ENCODE measurements at regions of chr12 and their contacts with region 1.

Region 1: GRCh38 chr12:91637789-91638624 is 455.4 kb upstream of the DCN start:
- DNase-seq: no peak
- ATAC-seq: peak; percentile 43
- H3K4me3 ChIP-seq: no peak overlapping the region
- H3K27ac ChIP-seq: no peak overlapping the region
- H3K4me1 ChIP-seq: no peaks in the 10 kb centered on the region
- H3K27me3 ChIP-seq: no peaks in the 10 kb centered on the region
- CTCF ChIP-seq: no peak
- EP300 ChIP-seq: no peak
- POLR2A ChIP-seq: no peak
- RAD21 ChIP-seq: no peak

Region 2: DNA sequence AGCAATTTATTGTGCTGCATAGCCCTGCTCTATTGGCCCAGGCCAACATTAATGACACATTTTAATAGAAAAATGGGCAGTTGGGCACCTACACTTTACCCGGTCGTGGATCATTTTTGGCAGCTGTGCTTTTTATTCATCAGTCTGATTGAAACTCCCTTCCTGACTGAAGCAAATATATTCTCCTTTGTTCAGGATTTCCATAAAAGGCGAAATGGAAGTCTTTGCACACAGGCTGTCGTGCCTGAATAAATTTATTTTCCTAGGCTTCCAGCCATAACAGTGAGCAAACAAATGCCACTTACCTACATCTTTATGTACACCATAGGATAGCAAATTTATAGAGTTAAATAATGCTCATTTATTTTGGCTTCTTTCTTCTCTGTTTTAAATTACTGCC is 25.3 kb after region 1 on chr12:
- CTCF ChIA-PET with region 1: interaction called, 3 read pairs
- POLR2A ChIA-PET with region 1: no interaction called
- RAD21 ChIA-PET with region 1: no interaction called
- SMC1A ChIA-PET with region 1: no interaction called
- in situ Hi-C with region 1: no loop called
- intact Hi-C with region 1: loop called (anchors 1 kb)
- DNase-seq: no peak
- ATAC-seq: no peak
- H3K4me3 ChIP-seq: no peak overlapping the region
- H3K27ac ChIP-seq: no peak overlapping the region
- H3K4me1 ChIP-seq: no peaks in the 10 kb centered on the region
- H3K27me3 ChIP-seq: no peaks in the 10 kb centered on the region
- CTCF ChIP-seq: no peak
- EP300 ChIP-seq: no peak
- POLR2A ChIP-seq: no peak
- RAD21 ChIP-seq: no peak

Region 3: GRCh38 chr12:91685917-91686316 is 47.9 kb after region 1 on chr12:
- CTCF ChIA-PET with region 1: no interaction called
- POLR2A ChIA-PET with region 1: no interaction called
- RAD21 ChIA-PET with region 1: no interaction called
- SMC1A ChIA-PET with region 1: no interaction called
- in situ Hi-C with region 1: no loop called
- intact Hi-C with region 1: no loop called
- DNase-seq: no peak
- ATAC-seq: no peak
- H3K4me3 ChIP-seq: no peak overlapping the region
- H3K27ac ChIP-seq: no peak overlapping the region
- H3K4me1 ChIP-seq: no peaks in the 10 kb centered on the region
- H3K27me3 ChIP-seq: no peaks in the 10 kb centered on the region
- CTCF ChIP-seq: no peak
- EP300 ChIP-seq: no peak
- POLR2A ChIP-seq: no peak
- RAD21 ChIP-seq: no peak

Region 4: GRCh38 chr12:91722072-91722471 is 84.1 kb after region 1 on chr12:
- CTCF ChIA-PET with region 1: no interaction called
- POLR2A ChIA-PET with region 1: no interaction called
- RAD21 ChIA-PET with region 1: no interaction called
- SMC1A ChIA-PET with region 1: no interaction called
- in situ Hi-C with region 1: no loop called
- intact Hi-C with region 1: no loop called
- DNase-seq: no peak
- ATAC-seq: peak; percentile 66
- H3K4me3 ChIP-seq: no peak overlapping the region
- H3K27ac ChIP-seq: no peak overlapping the region
- H3K4me1 ChIP-seq: no peaks in the 10 kb centered on the region
- H3K27me3 ChIP-seq: no peaks in the 10 kb centered on the region
- CTCF ChIP-seq: no peak
- EP300 ChIP-seq: no peak
- POLR2A ChIP-seq: no peak
- RAD21 ChIP-seq: no peak